Dorsolateral prefrontal cortex (tissue), 120 donors: ENCODE measurements at regions of chr2 and their contacts with region 1.

Region 1: DNA sequence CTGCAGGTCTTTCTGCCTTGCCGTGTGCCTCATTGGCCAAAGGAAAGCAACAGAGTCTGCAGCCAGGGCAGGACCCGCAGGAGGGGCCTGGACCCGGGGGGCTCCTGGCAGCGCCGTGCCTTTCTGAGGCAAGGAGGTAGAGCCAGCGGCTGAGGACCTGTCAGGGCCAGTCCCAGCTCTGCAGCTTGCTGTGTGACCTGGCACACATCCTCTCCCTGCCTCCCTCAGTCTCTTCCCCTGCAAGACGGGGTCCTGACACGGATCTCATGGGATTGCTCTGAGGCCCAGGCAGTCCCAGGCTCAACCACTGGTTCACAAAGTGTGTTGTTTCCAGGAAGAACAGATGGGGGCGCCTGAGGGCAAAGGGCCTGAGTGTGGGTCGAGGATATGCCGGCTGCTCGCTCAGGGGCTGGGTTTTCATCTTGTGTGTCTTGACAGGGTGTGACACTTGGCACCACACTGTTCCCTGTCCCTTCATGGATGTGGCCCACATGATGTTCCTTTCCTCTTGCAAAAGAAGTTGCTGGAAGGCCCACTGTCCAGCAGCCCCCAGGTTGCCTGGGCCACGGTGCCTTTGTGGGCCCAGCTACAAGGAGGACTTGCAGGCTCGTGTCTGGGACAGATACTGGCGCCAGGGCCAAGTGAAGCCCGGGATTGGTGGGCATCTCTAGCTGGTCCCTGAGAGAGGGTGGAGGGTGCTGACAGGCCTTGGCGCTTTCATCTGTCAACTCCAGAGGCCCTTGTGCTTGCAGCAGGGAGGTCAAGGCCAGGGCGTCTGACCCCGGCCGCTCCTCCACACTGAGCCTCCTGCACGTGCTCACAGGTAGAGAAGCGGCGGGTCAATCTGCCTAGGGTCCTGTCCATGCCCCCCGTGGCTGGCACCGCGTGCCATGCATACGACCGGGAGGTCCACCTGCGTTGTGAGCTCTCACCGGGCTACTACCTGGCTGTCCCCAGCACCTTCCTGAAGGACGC is 9.2 kb downstream of the CAPN10 start:
- DNase-seq: peak in 6 of 10 donors; percentile 4 to 41 (median 34)
- H3K4me3 ChIP-seq: no peak overlapping the region
- H3K27ac ChIP-seq: peak overlapping the region in 28 of 59 donors; percentile 8 to 80 (median 44)
- H3K27me3 ChIP-seq: no peaks in the 10 kb centered on the region
- CTCF ChIP-seq: peak in 14 of 56 donors; percentile 7 to 25 (median 16)

Region 2: GRCh38 chr2:240819858-240820606 is 224.2 kb after region 1 on chr2 and contains the start of gene KIF1A:
- intact Hi-C with region 1: loop called in 1 of 2 experiments (anchors 10 kb)
- DNase-seq: peak; percentile 84 to 97 (median 92)
- H3K4me3 ChIP-seq: peak within 1 kb of the TSS; percentile 53 to 97 (median 86)
- H3K27ac ChIP-seq: peak within 1 kb of the TSS; percentile 40 to 97 (median 93)
- H3K27me3 ChIP-seq: peaks cover 0 to 8% (median 0%) of the 10 kb centered on the region in 45 donors
- CTCF ChIP-seq: peak in 2 of 56 donors; percentile 6 to 7
- total RNA-seq, gene KIF1A: 869 to 1,843 (median 1,153) TPM